SK-N-SH (cell line): ENCODE measurements at regions of chr7 and their contacts with region 1.

Region 1: DNA sequence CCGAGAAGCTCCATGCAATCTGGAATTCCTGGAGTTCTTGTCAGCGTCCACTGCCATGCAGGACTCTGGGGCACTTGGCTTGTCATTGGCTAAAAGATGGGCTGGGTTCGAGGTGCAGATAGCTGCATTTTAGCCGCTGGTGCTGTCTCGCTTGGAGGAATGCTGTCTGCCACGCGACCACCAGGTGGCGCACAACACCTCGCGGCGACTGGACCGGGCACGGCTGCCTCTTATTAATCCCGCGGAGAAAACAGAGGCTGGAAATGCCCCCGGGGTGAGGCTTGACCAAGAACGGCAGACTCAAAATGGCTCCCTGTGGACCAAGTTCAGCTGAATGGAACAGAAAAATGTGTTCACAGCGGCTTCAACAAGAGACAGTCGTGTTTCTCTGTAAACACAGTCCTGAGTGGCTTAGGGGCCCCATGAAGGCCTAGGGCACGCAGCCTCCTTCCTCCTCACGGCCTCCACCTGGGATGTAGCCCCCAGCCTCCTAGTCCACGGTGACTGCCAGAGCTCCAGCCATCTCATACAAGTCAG is 46.2 kb downstream of the AOC1 start:
- DNase-seq: peak; percentile 90
- H3K4me3 ChIP-seq: no peak overlapping the region
- H3K27ac ChIP-seq: peak overlapping the region in 1 of 2 experiments; percentile 34; a peak in 1 of 4 replicates
- H3K4me1 ChIP-seq: peaks cover 2 to 48% of the 10 kb centered on the region in 2 experiments; a peak in 2 of 4 replicates
- H3K27me3 ChIP-seq: no peaks in the 10 kb centered on the region
- CTCF ChIP-seq: peak; percentile 99
- EP300 ChIP-seq: no peak
- RAD21 ChIP-seq: peak; percentile 98

Region 2: DNA sequence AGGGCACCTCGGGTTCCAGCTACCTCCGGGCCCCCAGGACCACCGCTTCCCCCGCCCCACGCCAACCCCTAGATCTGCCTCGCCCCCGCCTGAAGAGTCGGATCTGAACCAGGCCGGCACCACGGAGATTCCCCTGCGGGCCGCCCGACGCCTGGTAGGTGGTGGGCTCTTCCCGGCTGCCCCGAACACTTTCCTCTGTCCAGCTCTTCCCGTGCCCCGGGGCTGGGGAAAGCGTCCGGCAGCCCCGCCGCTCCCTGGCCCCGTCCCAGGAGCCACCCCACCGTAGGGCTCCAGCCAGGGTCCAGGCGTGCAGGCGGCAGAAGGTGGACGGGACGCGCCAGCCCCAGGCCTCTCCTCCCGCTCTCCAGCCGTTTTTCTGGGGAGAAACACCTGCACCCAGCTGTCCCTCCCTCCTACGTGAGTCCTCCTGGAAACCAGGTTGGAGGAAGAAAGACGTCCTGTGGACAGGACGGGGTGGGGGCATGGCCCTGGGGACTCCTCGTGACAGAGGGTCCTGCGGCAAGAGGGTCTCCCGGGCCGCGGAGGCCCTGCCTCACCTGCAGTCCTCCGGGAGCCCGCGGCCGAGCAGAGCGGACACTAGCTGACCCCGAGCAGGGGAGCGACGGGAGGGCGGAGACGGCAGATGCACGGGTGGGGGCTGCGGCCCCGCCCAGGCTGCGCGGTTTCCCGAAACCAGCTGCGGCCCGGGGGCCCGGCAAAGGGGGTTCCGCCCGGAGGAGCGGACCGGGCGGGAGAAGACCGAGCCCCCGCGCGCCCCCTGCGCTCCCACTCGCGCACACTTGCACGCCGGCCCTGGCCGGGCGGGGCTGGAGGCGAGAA is 98.6 kb before region 1 on chr7 and contains the start of gene TMEM176B:
- CTCF ChIA-PET with region 1: interaction called, 10 read pairs
- POLR2A ChIA-PET with region 1: no interaction called
- DNase-seq: peak; percentile 49
- H3K4me3 ChIP-seq: no peak within 1 kb of the TSS
- H3K27ac ChIP-seq: no peak within 1 kb of the TSS
- H3K4me1 ChIP-seq: peaks cover 0 to 7% of the 10 kb centered on the region in 2 experiments; a peak in 2 of 4 replicates
- H3K27me3 ChIP-seq: no peaks in the 10 kb centered on the region
- CTCF ChIP-seq: no peak
- EP300 ChIP-seq: no peak
- RAD21 ChIP-seq: no peak
- polyA plus RNA-seq, gene TMEM176B: 0.15 TPM in 1 of 2 replicates, not detected in the other

Region 3: DNA sequence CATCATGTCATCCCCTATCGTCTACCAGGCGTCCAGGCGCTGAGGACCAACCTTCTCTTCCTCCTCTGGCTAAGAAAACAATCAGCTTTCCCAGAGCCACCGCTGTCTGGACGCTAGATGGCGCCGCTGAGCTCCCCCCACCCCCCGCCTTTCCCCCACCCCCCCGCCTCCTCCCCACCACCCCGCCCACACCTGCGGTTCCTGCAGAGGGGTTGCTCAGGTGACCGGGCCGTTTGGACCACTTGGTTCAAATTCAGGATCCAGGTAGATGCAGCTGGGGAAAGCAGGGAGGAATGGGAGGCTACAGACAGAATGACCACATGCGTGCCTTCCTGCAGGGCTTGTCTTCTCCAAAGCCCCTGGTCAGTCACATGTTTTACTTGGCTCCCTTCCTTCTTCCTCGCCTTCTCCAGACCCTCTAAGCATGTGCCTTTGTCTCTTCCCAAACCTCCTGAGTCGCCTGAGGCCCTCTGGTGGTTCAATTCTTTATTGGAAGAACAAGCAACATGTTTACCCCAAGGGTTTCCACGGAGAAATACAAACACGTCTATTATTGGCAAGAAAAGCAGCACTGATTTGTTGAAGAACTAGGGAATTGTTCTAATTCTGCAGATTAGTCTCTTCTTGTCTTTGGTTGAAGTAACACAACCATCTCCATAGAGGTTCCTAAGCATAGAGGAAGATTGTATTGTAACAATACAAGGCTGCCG is 21.6 kb before region 1 on chr7:
- CTCF ChIA-PET with region 1: interaction called, 123 read pairs
- POLR2A ChIA-PET with region 1: no interaction called
- DNase-seq: peak; percentile 91
- H3K4me3 ChIP-seq: no peak overlapping the region
- H3K27ac ChIP-seq: peak overlapping the region in 1 of 2 experiments; percentile 60; a peak in 2 of 4 replicates
- H3K4me1 ChIP-seq: peaks cover 5% of the 10 kb centered on the region in 2 experiments; a peak in 2 of 4 replicates
- H3K27me3 ChIP-seq: no peaks in the 10 kb centered on the region
- CTCF ChIP-seq: peak; percentile 58
- EP300 ChIP-seq: no peak
- RAD21 ChIP-seq: peak; percentile 69

Region 4: GRCh38 chr7:150927956-150928344 is 29.4 kb after region 1 on chr7:
- CTCF ChIA-PET with region 1: interaction called, 72 read pairs
- POLR2A ChIA-PET with region 1: interaction called, 10 read pairs
- DNase-seq: no peak
- H3K4me3 ChIP-seq: no peak overlapping the region
- H3K27ac ChIP-seq: no peak overlapping the region
- H3K4me1 ChIP-seq: peaks cover 0 to 16% of the 10 kb centered on the region in 2 experiments; a peak in 2 of 4 replicates
- H3K27me3 ChIP-seq: 0 out of 2 replicates have a peak, but pooled peaks cover 14% of the 10 kb centered on the region
- CTCF ChIP-seq: no peak
- EP300 ChIP-seq: no peak
- RAD21 ChIP-seq: no peak

Region 5: GRCh38 chr7:150962553-150963399 is 64.2 kb after region 1 on chr7:
- CTCF ChIA-PET with region 1: interaction called, 280 read pairs
- POLR2A ChIA-PET with region 1: interaction called, 8 read pairs
- DNase-seq: peak; percentile 94
- H3K4me3 ChIP-seq: peak overlapping the region in 1 of 2 experiments; percentile 48; a peak in 1 of 4 replicates
- H3K27ac ChIP-seq: peak overlapping the region in 1 of 2 experiments; percentile 97; a peak in 2 of 4 replicates
- H3K4me1 ChIP-seq: peaks cover 0 to 89% of the 10 kb centered on the region in 2 experiments; a peak in 2 of 4 replicates
- H3K27me3 ChIP-seq: peaks cover 16% of the 10 kb centered on the region
- CTCF ChIP-seq: peak; percentile 95
- EP300 ChIP-seq: peak in 1 of 2 experiments; percentile 39; a peak in 1 of 4 replicates
- RAD21 ChIP-seq: peak; percentile 94

Region 6: GRCh38 chr7:150994141-150994964 is 95.8 kb after region 1 on chr7:
- CTCF ChIA-PET with region 1: interaction called, 77 read pairs
- POLR2A ChIA-PET with region 1: no interaction called
- DNase-seq: peak; percentile 83
- H3K4me3 ChIP-seq: no peak overlapping the region
- H3K27ac ChIP-seq: peak overlapping the region in 1 of 2 experiments; percentile 55; a peak in 1 of 4 replicates
- H3K4me1 ChIP-seq: peaks cover 0 to 20% of the 10 kb centered on the region in 2 experiments; a peak in 2 of 4 replicates
- H3K27me3 ChIP-seq: peaks cover 2% of the 10 kb centered on the region; the same call in 1 of the 2 replicates
- CTCF ChIP-seq: no peak
- EP300 ChIP-seq: no peak
- RAD21 ChIP-seq: no peak